HEK293T (cell line): ENCODE measurements at regions of chr7 and their contacts with region 1.

Region 1: DNA sequence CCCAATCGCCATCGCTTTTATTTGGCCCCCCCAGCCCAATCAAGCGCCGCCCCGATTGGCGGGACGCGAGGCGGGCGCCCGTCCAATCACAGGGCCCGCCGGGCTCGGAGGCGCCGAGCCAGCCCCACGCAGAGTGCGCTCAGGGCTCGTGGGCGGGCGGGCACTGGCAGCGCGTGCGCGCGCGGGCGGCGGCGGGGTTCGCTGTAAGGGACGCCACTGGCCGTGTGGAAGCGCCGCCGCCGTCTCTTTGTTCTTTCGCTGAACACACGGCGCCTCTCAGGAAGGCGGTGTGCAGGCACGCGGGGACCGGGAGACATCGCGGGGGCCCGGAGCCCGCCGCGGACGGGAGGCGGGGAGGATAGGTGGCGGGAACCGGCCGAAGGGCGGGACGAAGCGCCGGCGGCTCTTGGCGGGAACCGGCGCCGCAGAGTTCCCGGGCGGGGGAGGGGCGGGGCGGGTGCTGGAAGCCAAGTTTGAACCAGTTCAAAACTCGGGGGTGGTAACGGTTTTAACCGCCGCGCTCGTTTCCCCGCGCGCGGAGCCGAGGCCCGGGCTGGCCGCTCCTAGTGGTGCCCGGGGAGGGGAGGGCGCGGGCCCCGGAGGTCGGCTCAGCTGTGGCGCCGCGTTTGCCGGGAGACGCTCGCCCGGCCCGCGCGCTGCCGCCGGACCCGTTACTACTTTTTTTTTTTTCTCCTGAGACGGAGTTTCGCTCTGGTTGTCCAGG is 370 bp upstream of the EZH2 start:
- DNase-seq: peak; percentile 99

Region 2: DNA sequence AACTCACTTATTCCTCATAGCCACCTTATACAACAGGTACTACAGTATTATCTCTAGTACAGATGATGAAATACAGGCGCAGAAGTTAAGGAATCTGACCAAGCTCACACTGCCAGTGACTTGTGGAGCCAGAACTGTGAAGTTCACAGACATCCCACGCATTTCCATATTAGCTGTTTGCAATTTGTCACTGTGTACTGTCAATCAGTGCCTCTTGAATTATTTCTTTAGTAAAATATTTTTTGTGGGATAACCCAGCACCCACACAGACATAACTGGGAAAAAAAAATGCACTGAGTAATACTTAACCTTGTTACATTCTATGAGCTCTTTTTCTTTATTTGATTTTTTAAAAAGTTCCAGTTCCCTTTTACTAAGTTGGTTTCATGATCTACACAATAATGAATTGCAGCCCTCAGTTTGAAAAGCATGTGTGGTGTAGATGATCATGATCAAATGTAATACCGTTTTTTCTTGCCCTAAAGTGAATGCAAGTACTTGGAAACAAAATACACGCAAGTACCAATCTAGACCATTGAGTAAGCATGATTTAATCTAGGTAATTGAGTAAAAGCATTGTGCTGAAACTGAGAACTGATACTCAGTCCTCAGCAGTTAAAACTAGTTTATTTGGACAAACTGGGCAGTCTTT is 171.7 kb before region 1 on chr7:
- CTCF ChIA-PET with region 1: no interaction called
- POLR2A ChIA-PET with region 1: no interaction called
- DNase-seq: no peak

Region 3: GRCh38 chr7:148872188-148872587 is 12.3 kb before region 1 on chr7:
- CTCF ChIA-PET with region 1: no interaction called
- POLR2A ChIA-PET with region 1: interaction called, 12 read pairs
- DNase-seq: no peak

Region 4: DNA sequence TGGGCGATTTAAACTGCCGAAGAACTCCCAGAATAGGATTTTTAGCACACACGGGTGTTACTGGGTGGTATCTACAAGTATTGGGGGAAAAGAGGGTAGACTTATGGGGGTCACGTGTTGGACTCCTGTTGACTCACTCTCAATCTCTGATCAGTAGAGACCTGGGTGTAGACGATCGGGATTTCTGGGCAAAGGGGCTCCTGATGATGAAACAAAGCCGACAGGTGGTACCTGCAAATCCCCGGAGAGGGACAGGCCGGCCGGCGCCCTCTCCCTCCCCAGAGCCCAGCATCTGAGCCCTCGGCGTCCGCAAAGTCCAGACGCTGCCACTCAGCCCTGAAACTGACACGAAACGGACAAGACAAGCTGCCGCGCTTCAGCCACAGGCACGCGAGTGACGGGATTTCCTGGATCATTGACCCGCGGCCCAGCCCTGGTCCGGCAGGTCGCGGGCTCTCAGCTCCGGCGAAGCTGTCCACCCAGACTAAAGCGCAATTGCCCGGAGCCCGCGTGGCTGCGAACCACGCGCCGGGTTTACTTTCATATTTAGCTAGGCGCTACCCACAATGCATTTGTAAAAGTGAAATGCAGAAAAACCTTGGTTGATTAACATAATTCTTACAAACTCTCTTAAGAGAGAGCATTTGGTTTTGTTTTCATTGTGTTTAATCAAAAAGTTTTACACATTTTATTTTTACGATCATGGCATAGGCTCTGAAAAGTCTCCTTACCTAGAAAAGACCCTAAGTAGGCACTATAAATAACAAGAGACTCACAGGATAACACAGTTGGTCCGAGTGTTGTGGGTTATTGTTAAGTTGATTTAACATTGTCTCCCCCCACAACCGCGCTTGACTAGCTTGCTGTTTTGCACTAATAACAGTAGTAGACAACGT is 56.5 kb after region 1 on chr7:
- CTCF ChIA-PET with region 1: no interaction called
- POLR2A ChIA-PET with region 1: interaction called, 21 read pairs
- DNase-seq: peak; percentile 76